AG04450 (cell line): ENCODE measurements at regions of chr11 and their contacts with region 1.

Region 1: DNA sequence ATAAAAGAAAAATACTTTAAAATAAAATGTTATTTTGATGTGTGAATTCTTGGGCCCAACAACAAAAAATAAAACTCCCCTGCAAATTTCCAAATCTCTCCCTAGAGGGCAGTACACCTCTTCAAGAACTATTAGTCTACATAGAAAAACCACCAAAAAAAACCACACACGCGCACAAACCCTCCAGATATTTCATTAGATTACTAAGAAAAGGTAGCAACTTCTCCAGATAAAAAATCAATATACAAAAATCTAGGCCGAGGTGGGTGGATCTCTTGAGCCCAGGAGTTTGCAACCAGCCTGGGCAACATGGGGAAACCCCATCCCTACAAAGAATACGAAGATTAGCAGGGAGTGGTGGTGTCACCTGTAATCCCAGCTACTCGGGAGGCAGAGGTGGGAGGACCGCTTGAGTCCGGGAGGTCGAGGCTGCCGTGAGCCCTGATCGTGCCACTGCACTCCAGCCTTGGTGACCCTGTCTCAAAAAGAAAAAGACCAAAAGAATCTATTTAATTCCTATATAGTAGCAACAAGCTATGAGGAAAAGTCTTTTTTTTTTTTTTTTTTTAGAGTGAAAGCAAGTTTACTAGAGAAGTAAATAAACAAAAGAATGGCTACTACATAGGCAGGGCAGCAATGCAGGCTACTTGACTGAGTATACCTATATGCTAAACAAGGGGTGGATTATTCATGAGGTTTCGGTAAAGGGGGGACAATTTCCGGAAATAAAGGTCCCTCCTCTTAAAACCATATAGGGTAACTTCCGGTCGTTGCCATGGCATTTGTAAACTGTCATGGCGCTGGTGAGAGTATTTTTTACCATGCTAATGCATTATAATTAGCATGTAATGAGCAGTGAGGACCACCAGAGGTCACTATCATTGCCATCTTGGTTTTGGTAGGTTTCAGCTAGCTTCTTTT is 13.1 kb downstream of the B3GNT6 start:
- DNase-seq: peak; percentile 79
- H3K4me3 ChIP-seq: peak overlapping the region; percentile 59
- H3K27ac ChIP-seq: no peak overlapping the region
- H3K27me3 ChIP-seq: no peaks in the 10 kb centered on the region
- CTCF ChIP-seq: peak; percentile 77

Region 2: DNA sequence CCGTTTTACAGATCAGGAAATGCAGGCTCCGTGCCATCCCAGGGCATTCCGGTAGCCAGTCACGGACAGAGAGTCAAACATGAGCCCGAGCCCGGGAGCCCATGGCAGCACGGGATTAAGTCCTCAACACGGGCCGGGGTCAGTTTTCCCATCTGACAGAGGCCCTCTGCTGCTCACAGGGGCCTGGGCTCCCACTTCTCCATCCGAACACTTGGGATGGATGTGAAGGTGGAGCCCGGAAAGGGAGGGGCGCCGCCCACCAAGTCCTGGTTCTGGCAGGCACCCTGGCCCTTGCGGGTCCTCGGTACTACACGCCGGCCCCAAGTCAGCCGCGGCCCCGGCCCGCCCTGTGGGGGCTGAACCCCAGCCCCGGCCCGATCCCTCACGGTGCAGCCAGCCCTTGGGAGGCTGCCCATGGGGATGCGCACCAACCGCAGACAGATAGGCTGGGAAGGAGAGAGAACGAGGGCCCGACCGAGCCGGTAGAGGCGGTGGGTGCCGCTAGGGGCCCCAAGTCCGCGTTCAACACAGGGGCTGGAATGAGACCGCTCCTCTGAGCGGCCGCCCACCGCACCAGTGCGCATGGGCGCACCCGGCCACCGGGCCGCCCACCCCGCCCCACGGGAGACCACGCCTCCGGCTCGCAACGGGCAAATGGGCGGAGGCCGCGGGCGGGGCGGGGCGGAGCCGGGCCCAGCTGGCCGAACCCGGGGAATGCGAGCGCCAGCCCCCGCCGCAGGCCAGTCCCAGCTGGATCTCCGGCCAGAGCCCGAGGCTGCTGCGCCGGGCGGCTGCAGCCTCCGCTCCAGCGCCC is 19.2 kb after region 1 on chr11 and contains the start of gene CAPN5:
- CTCF ChIA-PET with region 1: interaction called, 14 read pairs
- POLR2A ChIA-PET with region 1: interaction called, 6 read pairs
- DNase-seq: peak; percentile 76
- H3K4me3 ChIP-seq: peak within 1 kb of the TSS; percentile 73
- H3K27ac ChIP-seq: peak within 1 kb of the TSS; percentile 87
- H3K27me3 ChIP-seq: no peaks in the 10 kb centered on the region
- CTCF ChIP-seq: peak; percentile 46
- polyA plus RNA-seq, gene CAPN5: 18.6 and 22.8 TPM in 2 replicates

Region 3: DNA sequence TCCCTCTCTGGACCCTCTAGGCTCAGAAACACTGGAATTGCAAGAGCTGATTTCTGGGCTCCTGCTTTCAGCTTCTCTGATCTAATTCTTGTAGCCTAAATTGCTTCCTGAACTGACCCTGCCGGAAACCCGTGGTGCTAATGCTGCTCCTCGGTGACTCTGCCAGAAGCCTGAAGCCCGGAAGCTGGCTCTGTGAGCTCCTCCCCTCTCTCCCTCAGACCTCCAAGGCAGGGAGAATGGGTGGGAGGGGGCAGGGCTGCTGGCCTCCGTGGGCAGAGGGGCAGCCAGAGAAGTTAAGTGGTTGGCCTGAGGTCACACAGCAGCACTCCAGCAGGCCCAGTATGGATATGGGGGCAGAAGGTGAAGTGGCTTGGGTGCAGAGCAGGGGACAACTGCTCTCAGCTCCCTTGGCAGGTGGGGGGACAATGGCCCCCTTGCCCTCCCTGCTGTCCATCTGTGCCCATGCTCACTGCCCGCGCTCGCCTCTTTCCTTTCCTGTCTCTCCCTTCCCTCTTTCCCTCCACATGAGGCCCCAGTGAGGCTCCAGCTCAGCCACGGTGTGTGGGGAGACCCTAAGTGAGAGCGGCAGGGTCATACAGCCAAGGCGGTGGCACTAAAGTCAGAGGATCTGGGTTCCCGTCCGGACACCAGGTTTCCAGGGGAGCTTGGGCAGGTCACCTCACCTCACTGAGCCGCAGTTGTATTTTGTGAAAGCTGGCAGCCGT is 35.7 kb after region 1 on chr11:
- CTCF ChIA-PET with region 1: interaction called, 156 read pairs
- POLR2A ChIA-PET with region 1: no interaction called
- DNase-seq: no peak
- H3K4me3 ChIP-seq: no peak overlapping the region
- H3K27ac ChIP-seq: peak overlapping the region; percentile 39
- H3K27me3 ChIP-seq: no peaks in the 10 kb centered on the region
- CTCF ChIP-seq: no peak

Region 4: GRCh38 chr11:77113382-77114088 is 66.3 kb after region 1 on chr11:
- CTCF ChIA-PET with region 1: interaction called, 18 read pairs
- POLR2A ChIA-PET with region 1: no interaction called
- DNase-seq: no peak
- H3K4me3 ChIP-seq: no peak overlapping the region
- H3K27ac ChIP-seq: no peak overlapping the region
- H3K27me3 ChIP-seq: no peaks in the 10 kb centered on the region
- CTCF ChIP-seq: peak; percentile 74

Region 5: DNA sequence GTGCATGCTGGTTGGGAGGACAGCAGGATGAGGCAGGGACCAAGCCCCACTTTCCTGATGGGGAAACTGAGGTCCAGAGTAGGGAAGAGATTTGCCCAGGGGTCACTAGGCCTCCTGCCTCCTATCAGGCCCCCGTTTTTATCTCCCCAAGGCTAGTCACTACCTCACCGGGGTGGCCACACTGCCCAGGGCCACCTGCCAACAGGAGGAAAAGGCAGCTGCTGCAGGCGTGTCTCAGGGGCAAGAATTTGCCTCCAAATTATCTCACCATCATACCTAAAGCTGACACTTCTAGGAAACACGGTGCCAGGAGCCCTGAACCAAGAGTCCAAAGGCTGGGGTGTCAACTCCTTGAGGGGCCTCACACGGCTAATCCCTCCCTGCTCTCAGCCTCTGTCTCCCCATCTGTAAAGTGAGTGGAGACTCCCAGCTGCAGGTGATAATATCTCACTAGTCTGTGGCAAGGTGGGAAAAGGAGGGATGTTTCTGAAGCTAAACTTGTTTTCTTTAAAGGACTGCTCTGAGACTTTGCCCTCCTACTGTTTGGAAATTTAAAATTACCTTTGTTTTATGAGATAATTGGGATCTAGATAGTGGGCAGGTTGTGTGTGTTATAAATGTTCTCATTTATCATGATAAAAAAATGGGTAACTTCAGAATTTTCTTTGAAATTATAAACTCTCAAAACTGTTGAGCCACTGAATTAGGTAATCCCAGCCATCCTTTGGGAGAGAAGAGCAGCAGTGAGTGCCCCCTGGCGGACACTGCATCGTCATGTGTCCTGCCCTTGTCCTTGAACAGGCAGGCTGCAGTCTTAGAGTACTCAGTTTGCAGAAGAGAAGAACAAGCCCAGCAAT is 140.7 kb after region 1 on chr11:
- CTCF ChIA-PET with region 1: interaction called, 29 read pairs
- POLR2A ChIA-PET with region 1: no interaction called
- DNase-seq: peak; percentile 53
- H3K4me3 ChIP-seq: no peak overlapping the region
- H3K27ac ChIP-seq: no peak overlapping the region
- H3K27me3 ChIP-seq: peaks cover 17% of the 10 kb centered on the region
- CTCF ChIP-seq: peak; percentile 95